GM18951 (cell line): ENCODE measurements at regions of chr22 and their contacts with region 1.

Region 1: DNA sequence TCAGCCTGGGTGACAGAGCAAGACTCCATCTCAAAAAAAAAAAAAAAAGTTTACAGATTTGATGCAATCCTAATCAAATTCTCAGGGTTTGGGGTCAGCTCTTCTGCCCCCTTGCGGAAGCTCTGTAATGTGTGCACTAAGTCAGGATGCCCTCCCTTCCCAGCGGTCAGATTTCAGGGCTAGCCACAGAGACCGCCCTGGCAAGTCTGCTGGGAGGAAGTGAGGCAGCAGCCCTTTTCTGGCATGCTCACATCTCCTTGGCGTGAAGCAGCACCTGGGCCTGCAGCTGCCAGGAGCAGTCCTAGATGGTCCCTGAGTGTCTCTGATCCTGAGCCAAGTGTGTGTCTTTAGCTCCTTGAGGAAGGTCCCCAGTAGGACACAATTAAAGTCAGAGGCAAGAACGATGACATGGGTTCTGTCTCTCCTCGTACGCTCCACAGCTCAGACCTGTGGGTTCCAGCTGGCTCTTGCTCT is 10.9 kb upstream of the APOBEC3C start:
- POLR2A ChIP-seq: peak; percentile 33

Region 2: GRCh38 chr22:38601221-38601764 is 401.9 kb before region 1 on chr22:
- in situ Hi-C with region 1: no loop called
- POLR2A ChIP-seq: no peak

Region 3: GRCh38 chr22:38872172-38872830 is 130.9 kb before region 1 on chr22 and contains the start of gene CBX6:
- in situ Hi-C with region 1: loop called (anchors 10 kb)
- POLR2A ChIP-seq: peak; percentile 83

Region 4: DNA sequence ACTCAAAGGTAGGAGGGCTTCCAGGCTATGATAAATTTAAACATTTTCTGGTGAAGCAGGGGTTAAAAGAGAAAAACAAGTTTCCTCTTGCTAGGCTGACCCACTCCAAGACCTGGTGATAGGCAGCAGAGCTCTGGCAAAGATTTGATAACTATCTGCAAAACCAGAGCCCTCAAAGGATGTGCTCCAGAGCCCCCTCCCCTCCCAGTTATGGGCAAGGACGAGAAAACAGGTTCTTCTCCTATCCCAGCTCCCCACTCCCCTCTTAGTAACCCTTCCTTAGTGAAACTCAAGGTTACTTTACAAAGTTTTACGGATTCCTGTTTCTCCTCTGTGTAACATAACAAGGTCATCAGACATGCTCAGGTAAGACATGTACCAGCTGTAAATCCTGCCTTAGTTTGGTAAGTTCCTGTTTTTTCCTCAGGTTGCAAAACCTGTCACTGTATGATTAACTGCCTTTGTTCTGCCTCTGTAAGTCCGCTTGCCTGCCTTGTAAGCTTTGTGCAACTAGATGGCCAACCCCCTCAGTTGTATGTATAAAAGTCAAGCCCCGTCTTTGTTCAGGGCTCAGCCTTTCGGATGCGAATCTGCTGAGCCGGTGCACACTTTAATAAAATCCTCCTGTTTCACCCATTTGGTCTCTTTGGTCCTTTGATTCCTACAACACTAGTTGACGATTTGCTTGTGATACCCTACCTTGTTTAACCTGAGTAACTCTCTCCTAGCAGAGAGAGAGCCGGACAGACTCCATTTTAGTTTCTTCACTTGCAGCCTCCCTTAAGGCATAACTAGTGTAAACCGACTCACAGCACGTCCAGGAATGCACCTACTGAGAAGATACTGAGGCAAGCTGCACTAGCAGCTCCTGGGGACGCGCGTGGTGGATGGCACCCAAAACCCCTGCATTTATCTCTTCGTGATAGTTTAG is 107.7 kb after region 1 on chr22:
- in situ Hi-C with region 1: no loop called
- POLR2A ChIP-seq: no peak

Region 5: DNA sequence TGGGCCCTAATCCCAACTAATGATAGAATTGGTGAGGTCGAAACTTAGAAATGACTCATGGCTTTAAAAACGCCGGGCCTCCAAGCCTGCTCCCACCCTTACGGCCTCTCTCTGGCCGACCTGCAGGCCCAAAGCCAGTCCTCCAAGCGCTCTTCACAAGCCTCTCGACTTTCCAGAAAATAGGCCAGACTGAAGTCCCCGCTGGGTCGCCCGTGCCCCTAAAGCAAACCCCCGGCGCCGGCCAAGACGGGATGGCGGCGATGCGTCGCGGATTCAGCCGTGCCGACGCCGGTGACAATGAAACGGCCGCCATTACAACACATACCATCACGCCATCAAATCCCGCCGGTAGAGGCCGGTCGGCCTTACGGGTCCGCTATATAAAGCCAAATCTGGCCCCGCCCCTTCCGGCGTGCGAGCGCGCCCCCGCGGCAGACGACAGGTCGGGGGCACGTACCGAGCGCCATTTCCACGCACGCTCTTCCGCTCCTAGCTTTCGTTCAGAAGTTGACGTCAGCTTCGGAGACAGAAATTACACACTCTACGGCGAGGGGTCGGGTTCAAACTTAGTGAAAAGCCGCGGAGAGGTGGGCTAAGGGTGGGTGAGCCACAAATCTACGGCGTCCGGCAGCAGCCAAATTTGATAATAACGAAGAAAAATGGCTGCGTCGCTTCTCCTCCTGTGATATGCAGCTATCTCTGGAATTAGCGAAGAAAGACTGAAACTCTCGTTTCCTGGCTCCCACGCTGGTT is 316.2 kb after region 1 on chr22 and contains the start of gene RPL3:
- in situ Hi-C with region 1: loop called (anchors 25 kb)
- POLR2A ChIP-seq: peak; percentile 100